ENCODE measurements at regions of chr11 and their contacts with region 1.

Region 1: GRCh38 chr11:59802639-59803176 is 7.9 kb downstream of the MRPL16 start:
- DNase-seq: no peak
- H3K4me3 ChIP-seq: no peak overlapping the region
- CTCF ChIP-seq: peak; percentile 37

Region 2: GRCh38 chr11:59787816-59788215 is 14.9 kb before region 1 on chr11:
- CTCF ChIA-PET with region 1: interaction called, 13 read pairs
- POLR2A ChIA-PET with region 1: no interaction called
- DNase-seq: peak; percentile 59
- H3K4me3 ChIP-seq: no peak overlapping the region
- CTCF ChIP-seq: no peak